Kidney (tissue), 22 donors: ENCODE measurements at regions of chr22 and their contacts with region 1.

Region 1: DNA sequence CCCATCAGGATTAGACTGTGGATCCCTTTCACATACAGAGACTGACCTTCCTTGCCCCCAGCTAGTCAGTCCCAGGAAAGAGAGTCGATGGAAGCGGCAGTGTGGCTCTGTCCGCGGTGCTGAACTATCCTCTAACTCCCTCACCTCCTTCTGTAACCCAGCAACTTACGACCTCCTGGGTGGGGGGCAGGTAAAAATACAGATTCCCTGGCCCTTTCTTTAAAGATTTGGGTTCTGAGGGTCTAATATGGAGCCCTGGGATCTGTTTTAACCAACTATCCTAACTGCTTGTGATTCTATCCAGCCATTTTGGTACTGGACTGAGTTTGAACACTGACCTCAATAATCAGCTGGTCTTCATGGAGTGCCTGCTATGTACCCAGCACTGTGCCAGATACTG is 23.2 kb downstream of the MFNG start:
- DNase-seq: peak in 4 of 5 donors; percentile 70 to 87 (median 80)
- H3K4me3 ChIP-seq: no peak overlapping the region
- H3K27ac ChIP-seq: no peak overlapping the region
- H3K4me1 ChIP-seq: no peaks in the 10 kb centered on the region
- H3K27me3 ChIP-seq: no peaks in the 10 kb centered on the region
- CTCF ChIP-seq: no peak

Region 2: DNA sequence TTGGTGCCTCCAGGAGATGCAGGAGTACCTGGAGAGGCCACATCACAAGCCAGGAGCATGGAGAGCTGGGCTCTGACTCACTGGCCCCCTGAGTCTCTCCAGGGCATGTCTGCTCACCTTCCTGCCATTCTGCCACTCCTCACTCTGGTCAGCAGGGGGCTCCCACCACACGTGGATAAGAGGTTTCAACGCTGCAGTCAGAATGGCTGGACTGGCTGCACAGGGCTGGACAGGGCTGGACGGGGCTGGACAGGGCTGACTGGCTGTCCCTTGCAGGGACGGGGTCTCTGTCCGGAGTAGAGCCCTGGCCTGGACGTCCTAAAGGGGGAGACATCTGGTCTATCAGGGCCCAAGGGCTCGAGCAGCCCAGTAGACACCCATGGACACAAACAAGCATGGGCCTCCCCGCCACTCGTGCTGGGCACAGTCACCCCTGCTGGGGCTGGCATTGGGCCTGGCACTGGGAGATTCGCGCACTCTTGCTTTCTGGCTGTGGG is 146.1 kb before region 1 on chr22:
- intact Hi-C with region 1: loop called (anchors 5 kb)
- DNase-seq: peak; percentile 88 to 95 (median 88)
- H3K4me3 ChIP-seq: no peak overlapping the region
- H3K27ac ChIP-seq: no peak overlapping the region
- H3K4me1 ChIP-seq: no peaks in the 10 kb centered on the region
- H3K27me3 ChIP-seq: no peaks in the 10 kb centered on the region
- CTCF ChIP-seq: peak; percentile 94